ENCODE measurements at regions of chr9 and their contacts with region 1.

Region 1: GRCh38 chr9:36407122-36407723 is 7.2 kb upstream of the RNF38 start:
- DNase-seq: peak; percentile 25
- ATAC-seq: peak; percentile 95
- H3K4me3 ChIP-seq: no peak overlapping the region
- H3K27ac ChIP-seq: no peak overlapping the region
- H3K4me1 ChIP-seq: no peaks in the 10 kb centered on the region
- H3K27me3 ChIP-seq: no peaks in the 10 kb centered on the region
- CTCF ChIP-seq: peak; percentile 84 to 93 (median 92)
- EP300 ChIP-seq: no peak
- POLR2A ChIP-seq: no peak
- RAD21 ChIP-seq: peak; percentile 87

Region 2: DNA sequence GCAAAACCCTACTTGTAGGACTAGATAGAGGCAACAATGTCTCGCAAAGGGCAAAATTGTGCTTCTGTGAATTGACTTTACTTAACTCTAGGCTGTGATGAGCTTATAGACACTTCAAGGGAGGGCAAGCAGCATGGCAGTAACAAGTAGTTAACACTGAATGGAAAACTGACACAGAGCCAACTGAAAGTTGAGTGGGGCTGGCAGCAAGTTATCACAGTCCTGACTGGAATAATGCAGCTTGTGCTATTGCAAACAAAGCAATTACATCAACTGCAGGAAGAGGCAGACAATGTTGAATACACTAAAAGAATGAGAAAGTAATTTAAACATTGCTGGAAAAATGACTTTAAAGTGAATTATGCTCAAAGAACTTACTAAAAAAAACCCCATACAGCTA is 69.4 kb before region 1 on chr9:
- CTCF ChIA-PET with region 1: interaction called, 10 read pairs
- POLR2A ChIA-PET with region 1: no interaction called
- RAD21 ChIA-PET with region 1: no interaction called
- SMC1A ChIA-PET with region 1: interaction called, 3 read pairs
- in situ Hi-C with region 1: no loop called
- intact Hi-C with region 1: no loop called
- DNase-seq: no peak
- ATAC-seq: no peak
- H3K4me3 ChIP-seq: no peak overlapping the region
- H3K27ac ChIP-seq: no peak overlapping the region
- H3K4me1 ChIP-seq: peaks cover 4% of the 10 kb centered on the region; the same call in 1 of the 2 replicates
- H3K27me3 ChIP-seq: no peaks in the 10 kb centered on the region
- CTCF ChIP-seq: no peak
- EP300 ChIP-seq: no peak
- POLR2A ChIP-seq: no peak
- RAD21 ChIP-seq: no peak

Region 3: GRCh38 chr9:36423206-36423605 is 16.0 kb after region 1 on chr9:
- CTCF ChIA-PET with region 1: interaction called, 39 read pairs
- POLR2A ChIA-PET with region 1: no interaction called
- RAD21 ChIA-PET with region 1: interaction called, 4 read pairs
- SMC1A ChIA-PET with region 1: interaction called, 17 read pairs
- in situ Hi-C with region 1: no loop called
- intact Hi-C with region 1: no loop called
- DNase-seq: no peak
- ATAC-seq: no peak
- H3K4me3 ChIP-seq: no peak overlapping the region
- H3K27ac ChIP-seq: no peak overlapping the region
- H3K4me1 ChIP-seq: no peaks in the 10 kb centered on the region
- H3K27me3 ChIP-seq: no peaks in the 10 kb centered on the region
- CTCF ChIP-seq: no peak
- EP300 ChIP-seq: no peak
- POLR2A ChIP-seq: no peak
- RAD21 ChIP-seq: no peak

Region 4: DNA sequence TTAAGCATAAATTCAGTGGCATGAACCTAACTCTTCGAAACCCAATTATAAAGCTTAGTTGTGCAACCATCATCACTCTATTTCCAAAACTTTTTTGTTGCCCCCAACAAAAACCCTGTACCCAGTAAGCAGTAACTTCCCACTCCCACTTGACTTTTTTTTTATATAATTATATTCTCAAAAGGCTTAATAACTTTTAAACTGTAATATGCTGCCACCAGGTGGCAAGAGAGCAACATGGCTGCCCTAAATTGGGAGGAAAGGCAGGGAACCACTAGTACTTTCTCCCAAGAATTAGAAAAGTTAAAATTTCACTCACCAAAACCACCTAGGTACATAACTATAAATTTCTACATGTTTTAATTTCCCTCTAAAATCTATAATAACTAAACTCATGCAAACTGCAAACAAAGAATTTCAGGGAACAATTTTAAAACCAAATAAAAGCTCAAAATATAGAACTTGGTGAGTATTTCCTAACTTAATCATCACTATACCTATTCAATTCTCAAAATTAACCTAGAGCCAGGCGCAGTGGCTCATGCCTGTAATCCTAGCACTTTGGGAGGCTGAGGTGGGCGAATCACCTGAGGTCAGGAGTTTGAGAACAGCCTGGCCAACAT is 43.0 kb after region 1 on chr9:
- CTCF ChIA-PET with region 1: interaction called, 98 read pairs
- POLR2A ChIA-PET with region 1: interaction called, 6 read pairs
- RAD21 ChIA-PET with region 1: interaction called, 23 read pairs
- SMC1A ChIA-PET with region 1: interaction called, 32 read pairs
- in situ Hi-C with region 1: no loop called
- intact Hi-C with region 1: loop called (anchors 1 kb)
- DNase-seq: no peak
- ATAC-seq: peak; percentile 34; the same call in 1 of the 3 replicates
- H3K4me3 ChIP-seq: no peak overlapping the region
- H3K27ac ChIP-seq: no peak overlapping the region
- H3K4me1 ChIP-seq: no peaks in the 10 kb centered on the region
- H3K27me3 ChIP-seq: no peaks in the 10 kb centered on the region
- CTCF ChIP-seq: peak; percentile 57 to 64 (median 59)
- EP300 ChIP-seq: no peak
- POLR2A ChIP-seq: no peak
- RAD21 ChIP-seq: peak; percentile 83

Region 5: DNA sequence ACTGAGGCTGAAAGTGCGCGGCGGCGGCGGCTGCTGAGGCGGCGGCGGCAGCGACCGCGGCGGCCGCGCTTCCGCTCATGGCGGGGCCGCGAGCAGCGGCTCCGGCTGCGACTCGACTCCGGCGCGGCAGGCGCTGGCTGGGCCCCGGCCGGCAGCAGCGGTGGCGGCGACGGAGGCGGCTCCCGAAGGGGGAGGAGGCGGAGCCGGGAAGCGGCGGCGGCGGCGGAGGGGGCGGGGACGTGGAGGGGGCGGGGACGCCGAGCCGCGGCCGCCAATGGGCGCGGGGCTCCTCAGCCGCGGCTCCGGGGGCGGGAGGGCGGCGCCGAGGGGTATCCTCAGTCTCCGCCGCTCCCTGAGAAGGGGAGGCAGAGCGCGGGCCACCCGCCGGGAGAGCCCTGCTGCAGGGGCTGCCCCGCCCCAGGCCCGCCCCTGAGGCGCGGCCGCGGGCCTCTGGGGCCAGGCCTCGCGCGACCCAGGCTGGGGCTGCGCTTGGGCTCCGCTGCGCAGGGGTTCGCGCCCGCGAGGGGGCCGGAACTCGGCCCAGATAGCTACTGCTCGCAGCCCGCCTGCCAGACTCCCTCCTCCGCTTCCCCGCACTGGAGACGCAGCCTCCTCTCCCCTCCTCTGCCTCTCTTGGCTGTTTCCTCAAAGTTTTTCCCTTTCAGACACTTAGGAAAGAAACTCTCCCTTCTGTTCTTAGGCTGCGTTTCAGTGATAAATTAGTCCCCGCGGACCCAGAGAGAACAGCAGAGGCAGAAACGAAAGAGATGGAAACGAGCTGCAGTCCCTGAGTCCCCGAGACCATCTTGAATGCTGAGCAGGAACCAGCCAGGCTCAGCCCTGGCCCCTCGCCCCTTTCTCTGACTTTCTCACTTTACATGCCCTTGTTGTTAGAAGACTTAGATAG is 80.5 kb after region 1 on chr9:
- CTCF ChIA-PET with region 1: interaction called, 33 read pairs
- POLR2A ChIA-PET with region 1: interaction called, 8 read pairs
- RAD21 ChIA-PET with region 1: interaction called, 18 read pairs
- SMC1A ChIA-PET with region 1: interaction called, 24 read pairs
- in situ Hi-C with region 1: no loop called
- intact Hi-C with region 1: no loop called
- DNase-seq: peak; percentile 62
- ATAC-seq: peak; percentile 95
- H3K4me3 ChIP-seq: peak overlapping the region; percentile 76
- H3K27ac ChIP-seq: peak overlapping the region; percentile 99
- H3K4me1 ChIP-seq: peaks cover 11% of the 10 kb centered on the region
- H3K27me3 ChIP-seq: no peaks in the 10 kb centered on the region
- CTCF ChIP-seq: no peak
- EP300 ChIP-seq: no peak
- POLR2A ChIP-seq: peak; percentile 91
- RAD21 ChIP-seq: no peak

Region 6: DNA sequence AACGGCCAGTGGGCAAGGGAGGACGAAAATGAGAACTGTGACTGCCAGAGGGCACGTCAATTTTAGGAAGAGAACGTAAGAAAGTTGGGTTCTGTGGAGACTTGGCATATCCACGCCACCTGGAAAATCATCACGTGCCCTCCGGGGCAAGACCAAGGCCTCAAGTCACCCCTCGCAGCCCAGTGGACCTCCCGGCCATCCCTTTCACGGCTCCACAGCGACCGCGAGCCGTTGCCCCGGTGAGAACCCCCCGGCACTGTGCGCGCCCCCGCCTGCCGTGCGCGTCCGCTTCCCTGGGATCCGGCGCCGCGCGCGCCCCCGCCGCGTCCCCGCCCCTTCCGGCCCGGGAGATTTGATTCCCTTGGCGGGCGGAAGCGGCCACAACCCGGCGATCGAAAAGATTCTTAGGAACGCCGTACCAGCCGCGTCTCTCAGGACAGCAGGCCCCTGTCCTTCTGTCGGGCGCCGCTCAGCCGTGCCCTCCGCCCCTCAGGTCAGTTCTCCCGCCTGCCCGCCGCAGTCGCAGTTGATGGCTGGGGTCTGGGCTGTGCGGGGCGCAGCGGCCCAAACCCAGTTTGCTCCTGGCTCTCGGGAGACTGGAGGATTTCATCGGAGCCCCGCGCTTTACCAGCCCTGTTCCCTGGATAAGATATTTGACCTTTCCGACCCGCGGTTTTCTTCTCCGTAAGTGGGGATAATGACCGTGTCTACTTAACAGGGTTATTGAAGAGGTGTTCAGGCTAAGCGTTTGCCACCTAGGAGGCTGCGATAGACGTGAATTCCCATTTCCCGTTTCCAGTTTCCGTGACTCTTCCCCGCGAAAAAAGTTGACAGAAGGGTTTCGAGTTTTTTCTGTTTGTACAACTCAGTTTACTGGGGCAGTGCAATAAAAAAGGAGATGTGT is 165.5 kb after region 1 on chr9 and contains the start of gene MELK:
- CTCF ChIA-PET with region 1: interaction called, 15 read pairs
- POLR2A ChIA-PET with region 1: no interaction called
- RAD21 ChIA-PET with region 1: interaction called, 3 read pairs
- SMC1A ChIA-PET with region 1: interaction called, 5 read pairs
- in situ Hi-C with region 1: no loop called
- intact Hi-C with region 1: loop called (anchors 5 kb)
- DNase-seq: no peak
- ATAC-seq: peak; percentile 84
- H3K4me3 ChIP-seq: peak within 1 kb of the TSS; percentile 100
- H3K27ac ChIP-seq: peak within 1 kb of the TSS; percentile 58
- H3K4me1 ChIP-seq: peaks cover 4% of the 10 kb centered on the region
- H3K27me3 ChIP-seq: no peaks in the 10 kb centered on the region
- CTCF ChIP-seq: no peak
- EP300 ChIP-seq: no peak
- POLR2A ChIP-seq: peak; percentile 97
- RAD21 ChIP-seq: no peak
- polyA plus RNA-seq, gene MELK: 49.9 to 51.1 TPM

Measured in GM12878 (cell line).